CD4-positive, alpha-beta T cell (primary cell): ENCODE measurements at regions of chr1 and their contacts with region 1.

Region 1: GRCh38 chr1:223712194-223712849 is at the start of gene CAPN2:
- DNase-seq: peak; percentile 16 to 87 (median 52)
- ATAC-seq: peak; percentile 48
- H3K4me3 ChIP-seq: peak within 1 kb of the TSS; percentile 84
- H3K4me3 Mint-ChIP-seq: peak within 1 kb of the TSS; percentile 90
- H3K27ac ChIP-seq: peak within 1 kb of the TSS; percentile 68 to 77
- H3K27ac Mint-ChIP-seq: peak within 1 kb of the TSS; percentile 90
- H3K4me1 ChIP-seq: peaks cover 64% of the 10 kb centered on the region
- H3K4me1 Mint-ChIP-seq: peaks cover 65% of the 10 kb centered on the region
- H3K27me3 ChIP-seq: no peaks in the 10 kb centered on the region
- H3K27me3 Mint-ChIP-seq: no peaks in the 10 kb centered on the region
- CTCF ChIP-seq: peak; percentile 33
- total RNA-seq, gene CAPN2: 110 to 114 TPM

Region 2: GRCh38 chr1:223479718-223480425 is 232.4 kb before region 1 on chr1:
- CTCF ChIA-PET with region 1: no interaction called
- POLR2A ChIA-PET with region 1: no interaction called
- intact Hi-C with region 1: no loop called
- DNase-seq: no peak
- ATAC-seq: no peak
- H3K4me3 ChIP-seq: no peak overlapping the region
- H3K4me3 Mint-ChIP-seq: no peak overlapping the region
- H3K27ac ChIP-seq: no peak overlapping the region
- H3K27ac Mint-ChIP-seq: no peak overlapping the region
- H3K4me1 ChIP-seq: peaks cover 3% of the 10 kb centered on the region
- H3K4me1 Mint-ChIP-seq: peaks cover 8% of the 10 kb centered on the region
- H3K27me3 ChIP-seq: peaks cover 0 to 10% of the 10 kb centered on the region in 2 experiments
- H3K27me3 Mint-ChIP-seq: peaks cover 29% of the 10 kb centered on the region
- CTCF ChIP-seq: no peak

Region 3: DNA sequence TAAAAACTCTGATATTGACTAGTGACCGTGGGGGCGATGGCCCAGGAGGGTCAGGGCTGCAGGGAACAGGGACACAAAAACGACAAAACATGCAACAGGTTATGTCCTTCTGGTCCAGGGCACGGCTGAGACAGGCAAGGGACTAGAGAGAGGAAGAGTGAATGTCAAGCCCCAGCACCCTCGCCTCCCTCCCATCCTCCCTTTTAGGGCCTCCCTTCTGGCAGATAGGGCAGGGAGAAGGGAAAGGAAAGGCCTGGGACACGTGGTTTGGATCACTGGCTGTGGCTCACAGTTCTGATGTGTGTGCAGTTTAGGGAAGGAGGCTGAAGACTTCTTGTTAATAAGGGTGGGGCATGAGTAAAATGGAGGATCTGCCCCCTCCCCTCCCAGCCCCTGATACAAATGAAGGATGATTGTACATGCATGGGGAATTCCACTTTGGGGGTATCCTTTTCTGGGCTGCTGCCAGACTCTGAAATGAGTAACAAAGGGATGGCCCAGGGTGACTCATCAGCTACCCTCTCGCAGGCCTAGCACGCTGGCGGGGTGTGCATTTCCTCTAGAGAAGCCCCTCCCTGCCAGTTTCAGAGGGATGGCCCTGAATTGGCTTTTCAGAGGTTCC is 14.2 kb after region 1 on chr1:
- CTCF ChIA-PET with region 1: interaction called, 11 read pairs
- POLR2A ChIA-PET with region 1: interaction called, 20 read pairs
- intact Hi-C with region 1: loop called (anchors 2 kb)
- DNase-seq: peak; percentile 56 to 95 (median 83)
- ATAC-seq: peak; percentile 97
- H3K4me3 ChIP-seq: no peak overlapping the region
- H3K4me3 Mint-ChIP-seq: peak overlapping the region; percentile 30
- H3K27ac ChIP-seq: peak overlapping the region; percentile 54 to 77
- H3K27ac Mint-ChIP-seq: peak overlapping the region; percentile 87
- H3K4me1 ChIP-seq: peaks cover 68% of the 10 kb centered on the region
- H3K4me1 Mint-ChIP-seq: peaks cover 69% of the 10 kb centered on the region
- H3K27me3 ChIP-seq: no peaks in the 10 kb centered on the region
- H3K27me3 Mint-ChIP-seq: no peaks in the 10 kb centered on the region
- CTCF ChIP-seq: no peak